PC-3 (cell line): ENCODE measurements at regions of chr15 and their contacts with region 1.

Region 1: GRCh38 chr15:55407949-55408791 is at the starts of genes CCPG1 and PIERCE2:
- DNase-seq: peak; percentile 90
- ATAC-seq: peak; percentile 91
- H3K4me3 ChIP-seq: peak within 1 kb of the TSS; percentile 79
- H3K27ac ChIP-seq: peak within 1 kb of the TSS; percentile 46
- H3K4me1 ChIP-seq: peaks cover 4% of the 10 kb centered on the region; the same call in 1 of the 2 replicates
- H3K27me3 ChIP-seq: no peaks in the 10 kb centered on the region
- CTCF ChIP-seq: peak; percentile 47
- total RNA-seq, gene CCPG1: 7.5 and 7.8 TPM in 2 replicates
- total RNA-seq, gene PIERCE2: 0.63 and 3.1 TPM in 2 replicates

Region 2: DNA sequence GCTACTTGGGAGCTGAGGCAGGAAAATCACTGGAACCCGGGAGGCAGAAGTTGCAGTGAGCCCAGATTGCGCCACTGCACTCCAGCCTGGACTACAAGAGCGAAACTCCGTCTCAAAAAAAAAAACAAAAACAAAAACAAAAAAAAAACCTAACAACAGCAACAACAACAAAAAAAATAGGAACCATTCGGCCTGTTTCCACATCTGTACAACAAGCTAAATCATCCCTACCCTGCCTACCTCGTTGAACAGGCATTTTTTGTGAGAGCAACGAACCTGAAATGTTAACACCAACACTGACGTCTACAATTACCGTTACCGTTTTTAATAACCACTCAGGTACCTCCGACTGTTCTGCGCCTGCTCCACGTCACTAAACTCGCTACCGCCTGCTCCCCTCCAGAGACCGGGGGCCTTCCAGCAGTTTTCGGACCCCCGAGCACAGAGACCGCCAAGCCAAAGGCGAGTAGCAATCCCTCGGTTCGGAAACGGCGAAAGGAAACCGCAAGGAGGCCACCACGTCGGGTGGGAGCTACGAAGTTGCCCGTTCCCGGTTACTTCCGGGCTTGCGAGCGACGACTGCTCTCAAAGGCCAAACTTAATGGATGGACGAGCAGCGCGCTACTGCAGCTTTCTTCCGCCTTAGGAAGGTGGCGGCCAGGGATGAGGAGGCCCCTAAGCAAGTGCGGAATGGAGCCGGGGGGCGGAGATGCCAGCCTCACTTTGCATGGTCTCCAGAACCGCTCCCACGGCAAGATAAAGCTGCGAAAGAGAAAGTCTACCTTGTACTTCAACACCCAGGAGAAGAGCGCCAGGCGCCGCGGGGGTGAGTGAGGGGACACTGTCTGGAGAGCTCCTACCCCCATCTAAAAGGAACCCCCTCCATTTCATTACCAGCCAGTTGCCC is 89.3 kb before region 1 on chr15 and contains the starts of genes PIGB and PIGBOS1:
- CTCF ChIA-PET with region 1: no interaction called
- POLR2A ChIA-PET with region 1: no interaction called
- intact Hi-C with region 1: loop called (anchors 5 kb)
- DNase-seq: peak; percentile 76
- ATAC-seq: peak; percentile 90
- H3K4me3 ChIP-seq: peak within 1 kb of the TSS; percentile 93
- H3K27ac ChIP-seq: peak within 1 kb of the TSS; percentile 82
- H3K4me1 ChIP-seq: peaks cover 4% of the 10 kb centered on the region
- H3K27me3 ChIP-seq: no peaks in the 10 kb centered on the region
- CTCF ChIP-seq: no peak
- total RNA-seq, gene PIGB: 10.9 and 15.3 TPM in 2 replicates
- total RNA-seq, gene PIGBOS1: 8.4 and 8.6 TPM in 2 replicates

Region 3: DNA sequence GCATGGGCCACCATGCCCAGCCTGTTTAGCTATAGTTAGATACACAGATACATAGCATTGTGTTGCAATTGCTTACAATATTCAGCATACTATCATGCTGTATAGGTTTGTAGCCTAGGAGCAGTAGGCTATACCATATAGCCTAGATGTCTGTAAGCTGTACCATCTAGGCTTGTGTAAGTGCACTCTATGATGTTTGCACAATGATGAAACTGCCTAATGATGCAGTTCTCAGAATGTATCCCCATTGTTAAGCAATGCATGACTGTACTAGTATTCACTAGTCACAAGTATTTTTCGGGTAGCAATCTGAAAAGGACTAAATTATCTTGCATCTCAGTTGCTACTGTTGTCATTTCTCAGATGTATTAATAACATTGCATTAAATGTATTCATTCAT is 73.2 kb before region 1 on chr15:
- CTCF ChIA-PET with region 1: no interaction called
- POLR2A ChIA-PET with region 1: no interaction called
- intact Hi-C with region 1: no loop called
- DNase-seq: peak; percentile 85
- ATAC-seq: peak; percentile 73
- H3K4me3 ChIP-seq: no peak overlapping the region
- H3K27ac ChIP-seq: peak overlapping the region; percentile 95
- H3K4me1 ChIP-seq: peaks cover 20% of the 10 kb centered on the region
- H3K27me3 ChIP-seq: no peaks in the 10 kb centered on the region
- CTCF ChIP-seq: no peak

Region 4: DNA sequence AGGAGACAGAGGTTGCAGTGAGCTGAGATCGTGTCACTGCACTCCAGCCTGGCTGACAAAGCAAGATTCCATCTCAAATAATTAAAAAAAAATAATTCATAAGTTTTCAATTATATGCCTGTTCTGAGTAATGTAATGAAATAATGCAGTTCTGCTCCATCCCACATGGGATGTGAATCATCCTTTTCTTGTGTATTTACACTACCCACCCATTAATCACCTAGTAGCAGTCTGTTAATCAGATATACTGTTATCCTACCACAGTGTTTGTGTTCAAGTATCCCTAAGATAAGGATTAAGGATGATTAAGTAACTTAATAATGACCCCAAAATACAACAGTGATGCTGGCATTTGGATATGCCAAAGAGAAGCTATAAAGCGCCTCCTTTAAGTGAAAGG is 50.4 kb before region 1 on chr15:
- CTCF ChIA-PET with region 1: interaction called, 4 read pairs
- POLR2A ChIA-PET with region 1: interaction called, 7 read pairs
- intact Hi-C with region 1: loop called (anchors 10 kb)
- DNase-seq: peak; percentile 32
- ATAC-seq: peak; percentile 98
- H3K4me3 ChIP-seq: no peak overlapping the region
- H3K27ac ChIP-seq: no peak overlapping the region
- H3K4me1 ChIP-seq: peaks cover 18% of the 10 kb centered on the region; the same call in 1 of the 2 replicates
- H3K27me3 ChIP-seq: no peaks in the 10 kb centered on the region
- CTCF ChIP-seq: no peak

Region 5: GRCh38 chr15:55389276-55389631 is 18.9 kb before region 1 on chr15:
- CTCF ChIA-PET with region 1: no interaction called
- POLR2A ChIA-PET with region 1: no interaction called
- intact Hi-C with region 1: loop called (anchors 1 kb)
- DNase-seq: peak; percentile 80
- ATAC-seq: peak; percentile 96
- H3K4me3 ChIP-seq: peak overlapping the region; percentile 50; the same call in 1 of the 2 replicates
- H3K27ac ChIP-seq: peak overlapping the region; percentile 82
- H3K4me1 ChIP-seq: peaks cover 18% of the 10 kb centered on the region
- H3K27me3 ChIP-seq: no peaks in the 10 kb centered on the region
- CTCF ChIP-seq: no peak